Endothelial cell of umbilical vein (primary cell): ENCODE measurements at regions of chr12 and their contacts with region 1.

Region 1: GRCh38 chr12:10749700-10750384 is 26.7 kb upstream of the YBX3 start:
- DNase-seq: peak; percentile 98
- H3K4me3 ChIP-seq: peak overlapping the region in 1 of 3 experiments; percentile 24
- H3K27ac ChIP-seq: peak overlapping the region; percentile 36
- H3K4me1 ChIP-seq: peaks cover 4% of the 10 kb centered on the region
- H3K27me3 ChIP-seq: peaks cover 9 to 13% of the 10 kb centered on the region in 2 experiments
- CTCF ChIP-seq: peak; percentile 80 to 93
- POLR2A ChIP-seq: no peak

Region 2: GRCh38 chr12:10331642-10332239 is 418.1 kb before region 1 on chr12:
- CTCF ChIA-PET with region 1: interaction called, 8 read pairs
- POLR2A ChIA-PET with region 1: no interaction called
- dilution Hi-C with region 1: no loop called
- intact Hi-C with region 1: loop called (anchors 1 kb)
- DNase-seq: peak; percentile 62
- H3K4me3 ChIP-seq: no peak overlapping the region
- H3K27ac ChIP-seq: no peak overlapping the region
- H3K4me1 ChIP-seq: no peaks in the 10 kb centered on the region
- H3K27me3 ChIP-seq: no peaks in the 10 kb centered on the region
- CTCF ChIP-seq: peak; percentile 59 to 65
- POLR2A ChIP-seq: no peak

Region 3: GRCh38 chr12:10613349-10614055 is 136.3 kb before region 1 on chr12 and contains the start of gene MAGOHB:
- CTCF ChIA-PET with region 1: interaction called, 9 read pairs
- POLR2A ChIA-PET with region 1: no interaction called
- dilution Hi-C with region 1: no loop called
- intact Hi-C with region 1: loop called (anchors 1 kb)
- DNase-seq: peak; percentile 95
- H3K4me3 ChIP-seq: peak within 1 kb of the TSS; percentile 58 to 96 (median 93)
- H3K27ac ChIP-seq: peak within 1 kb of the TSS; percentile 90
- H3K4me1 ChIP-seq: peaks cover 18% of the 10 kb centered on the region
- H3K27me3 ChIP-seq: no peaks in the 10 kb centered on the region
- CTCF ChIP-seq: no peak
- POLR2A ChIP-seq: peak; percentile 70
- total RNA-seq, gene MAGOHB: 45.4 and 48.3 TPM in 2 replicates

Region 4: GRCh38 chr12:10716704-10717315 is 33.0 kb before region 1 on chr12:
- CTCF ChIA-PET with region 1: interaction called, 49 read pairs
- POLR2A ChIA-PET with region 1: no interaction called
- dilution Hi-C with region 1: no loop called
- intact Hi-C with region 1: loop called (anchors 1 kb)
- DNase-seq: peak; percentile 95
- H3K4me3 ChIP-seq: peak overlapping the region in 2 of 3 experiments; percentile 6 to 44
- H3K27ac ChIP-seq: peak overlapping the region; percentile 82
- H3K4me1 ChIP-seq: peaks cover 63% of the 10 kb centered on the region
- H3K27me3 ChIP-seq: no peaks in the 10 kb centered on the region
- CTCF ChIP-seq: no peak
- POLR2A ChIP-seq: peak; percentile 49

Region 5: DNA sequence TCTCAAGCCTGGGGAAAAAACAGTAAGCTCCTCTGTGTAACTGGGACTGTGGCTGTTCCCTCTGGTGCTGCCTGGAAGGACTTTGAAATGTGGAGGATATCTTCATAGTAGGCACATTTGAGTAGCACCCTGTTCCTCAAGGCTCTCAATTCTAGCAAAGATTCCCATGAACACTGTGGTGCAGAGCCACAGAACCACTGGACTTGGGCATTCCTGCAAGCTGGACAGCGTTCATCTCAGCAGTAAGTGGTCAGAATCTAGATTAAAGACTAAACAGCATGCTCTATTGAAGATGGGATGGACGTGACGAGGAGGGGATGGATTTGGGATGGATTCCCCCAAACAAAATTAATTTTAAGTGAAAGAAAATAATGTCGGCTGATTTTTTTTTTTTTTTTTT is 17.3 kb before region 1 on chr12:
- CTCF ChIA-PET with region 1: interaction called, 18 read pairs
- POLR2A ChIA-PET with region 1: no interaction called
- dilution Hi-C with region 1: no loop called
- intact Hi-C with region 1: no loop called
- DNase-seq: no peak
- H3K4me3 ChIP-seq: no peak overlapping the region
- H3K27ac ChIP-seq: no peak overlapping the region
- H3K4me1 ChIP-seq: no peaks in the 10 kb centered on the region
- H3K27me3 ChIP-seq: peaks cover 0 to 2% of the 10 kb centered on the region in 2 experiments
- CTCF ChIP-seq: no peak
- POLR2A ChIP-seq: no peak

Region 6: DNA sequence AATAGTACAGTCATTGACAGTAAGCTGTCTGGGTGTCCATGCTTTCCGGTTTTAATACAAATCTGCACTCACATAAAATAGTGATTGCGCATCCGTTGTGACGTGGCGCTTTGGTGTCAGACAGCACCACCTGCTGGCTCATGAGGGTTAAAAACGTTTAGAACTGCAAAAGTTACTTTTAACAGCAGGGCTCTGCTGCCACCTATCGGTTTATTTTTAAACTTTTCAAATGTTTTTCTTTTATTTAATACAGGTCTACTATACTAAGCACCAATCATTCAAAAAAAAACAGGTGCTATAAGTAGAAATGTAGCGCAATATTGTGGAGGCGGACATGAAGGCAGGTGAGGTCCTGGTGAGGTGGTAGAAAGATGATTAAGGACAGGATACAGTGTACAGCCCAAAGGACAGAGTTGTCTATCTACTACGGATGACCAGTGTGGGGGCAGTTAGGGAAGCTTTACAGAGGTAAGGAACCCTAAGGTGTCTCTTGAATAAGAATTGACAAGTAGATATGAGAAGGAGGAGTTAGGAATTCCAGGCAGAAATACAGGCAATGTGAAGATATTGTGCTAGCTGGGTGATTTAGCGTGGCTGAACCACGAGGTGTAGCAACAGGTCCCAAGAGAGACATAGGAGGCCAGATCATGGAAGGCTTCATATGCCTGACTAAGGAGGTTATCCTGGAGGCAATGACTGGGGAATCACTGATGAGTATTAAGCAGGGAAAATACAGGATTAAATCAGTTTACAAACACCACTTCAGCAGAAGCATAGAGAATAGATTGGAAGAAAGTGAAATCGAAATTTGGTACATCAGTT is 737.0 kb after region 1 on chr12:
- CTCF ChIA-PET with region 1: no interaction called
- POLR2A ChIA-PET with region 1: no interaction called
- dilution Hi-C with region 1: no loop called
- intact Hi-C with region 1: loop called (anchors 5 kb)
- DNase-seq: peak; percentile 83
- H3K4me3 ChIP-seq: no peak overlapping the region
- H3K27ac ChIP-seq: no peak overlapping the region
- H3K4me1 ChIP-seq: peaks cover 17% of the 10 kb centered on the region
- H3K27me3 ChIP-seq: peaks cover 7 to 23% of the 10 kb centered on the region in 2 experiments
- CTCF ChIP-seq: peak; percentile 79 to 95
- POLR2A ChIP-seq: no peak